ENCODE measurements at regions of chr19 and their contacts with region 1.

Region 1: GRCh38 chr19:21082011-21082975 is at the start of gene ZNF714:
- DNase-seq: peak; percentile 81 to 90 (median 86)
- H3K4me3 ChIP-seq: peak within 1 kb of the TSS; percentile 39 to 80
- H3K4me3 Mint-ChIP-seq: peak within 1 kb of the TSS; percentile 93 to 100 (median 99)
- H3K27ac ChIP-seq: peak within 1 kb of the TSS; percentile 61
- H3K27ac Mint-ChIP-seq: peak within 1 kb of the TSS; percentile 89 to 98 (median 94)
- H3K4me1 ChIP-seq: no peaks in the 10 kb centered on the region
- H3K4me1 Mint-ChIP-seq: peaks cover 4 to 21% (median 14%) of the 10 kb centered on the region in 4 donors
- H3K27me3 ChIP-seq: no peaks in the 10 kb centered on the region
- H3K27me3 Mint-ChIP-seq: no peaks in the 10 kb centered on the region
- total RNA-seq, gene ZNF714: 11.5 to 14.7 TPM

Region 2: GRCh38 chr19:20999731-21000352 is 82.5 kb before region 1 on chr19:
- CTCF ChIA-PET with region 1: no interaction called
- POLR2A ChIA-PET with region 1: interaction called, 4 read pairs
- intact Hi-C with region 1: loop called (anchors 1 kb)
- DNase-seq: peak; percentile 85 to 93 (median 91)
- H3K4me3 ChIP-seq: peak overlapping the region; percentile 47 to 66
- H3K4me3 Mint-ChIP-seq: peak overlapping the region; percentile 84 to 91 (median 86)
- H3K27ac ChIP-seq: no peak overlapping the region
- H3K27ac Mint-ChIP-seq: peak overlapping the region; percentile 41 to 77 (median 55)
- H3K4me1 ChIP-seq: peaks cover 5% of the 10 kb centered on the region
- H3K4me1 Mint-ChIP-seq: peaks cover 0 to 8% (median 5%) of the 10 kb centered on the region in 4 donors
- H3K27me3 ChIP-seq: no peaks in the 10 kb centered on the region
- H3K27me3 Mint-ChIP-seq: no peaks in the 10 kb centered on the region

Region 3: GRCh38 chr19:21141787-21142464 is 59.6 kb after region 1 on chr19 and contains the start of gene ZNF431:
- CTCF ChIA-PET with region 1: no interaction called
- POLR2A ChIA-PET with region 1: interaction called, 5 read pairs
- intact Hi-C with region 1: loop called (anchors 1 kb)
- DNase-seq: peak; percentile 89 to 93 (median 90)
- H3K4me3 ChIP-seq: peak within 1 kb of the TSS; percentile 71 to 94
- H3K4me3 Mint-ChIP-seq: peak within 1 kb of the TSS; percentile 96 to 99 (median 98)
- H3K27ac ChIP-seq: peak within 1 kb of the TSS; percentile 74
- H3K27ac Mint-ChIP-seq: peak within 1 kb of the TSS; percentile 91 to 99 (median 97)
- H3K4me1 ChIP-seq: peaks cover 21% of the 10 kb centered on the region
- H3K4me1 Mint-ChIP-seq: peaks cover 24 to 59% (median 40%) of the 10 kb centered on the region in 4 donors
- H3K27me3 ChIP-seq: no peaks in the 10 kb centered on the region
- H3K27me3 Mint-ChIP-seq: no peaks in the 10 kb centered on the region
- total RNA-seq, gene ZNF431: 32.1 to 34.4 TPM

Measured in CD4-positive, alpha-beta memory T cell (primary cell).